ENCODE measurements at regions of chr6 and their contacts with region 1.

Region 1: GRCh38 chr6:110318971-110319370 is 39.2 kb downstream of the METTL24 start:
- DNase-seq: no peak
- H3K4me3 ChIP-seq: no peak overlapping the region
- H3K27me3 ChIP-seq: no peaks in the 10 kb centered on the region; the same call in 1 of the 2 replicates
- CTCF ChIP-seq: no peak

Region 2: DNA sequence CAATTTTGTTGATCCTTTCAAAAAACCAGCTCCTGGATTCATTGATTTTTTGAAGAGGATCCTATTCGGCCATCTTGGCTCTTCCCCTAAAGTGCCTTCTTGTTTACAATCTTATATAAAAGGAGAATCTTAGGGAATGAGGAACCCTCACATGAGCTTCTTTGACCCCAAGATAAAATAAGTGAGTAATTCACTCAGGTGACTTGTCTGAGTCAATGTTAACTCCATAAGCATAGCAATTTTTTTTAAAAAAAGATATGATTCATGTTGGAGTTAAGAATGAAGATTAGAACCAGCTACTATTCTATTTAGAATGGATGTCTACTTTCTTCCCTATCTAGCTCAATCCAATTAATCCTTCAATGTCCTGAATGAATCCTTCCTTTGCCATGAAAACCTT is 160.5 kb before region 1 on chr6:
- CTCF ChIA-PET with region 1: no interaction called
- POLR2A ChIA-PET with region 1: no interaction called
- DNase-seq: no peak
- H3K4me3 ChIP-seq: no peak overlapping the region
- H3K27me3 ChIP-seq: no peaks in the 10 kb centered on the region
- CTCF ChIP-seq: no peak

Region 3: DNA sequence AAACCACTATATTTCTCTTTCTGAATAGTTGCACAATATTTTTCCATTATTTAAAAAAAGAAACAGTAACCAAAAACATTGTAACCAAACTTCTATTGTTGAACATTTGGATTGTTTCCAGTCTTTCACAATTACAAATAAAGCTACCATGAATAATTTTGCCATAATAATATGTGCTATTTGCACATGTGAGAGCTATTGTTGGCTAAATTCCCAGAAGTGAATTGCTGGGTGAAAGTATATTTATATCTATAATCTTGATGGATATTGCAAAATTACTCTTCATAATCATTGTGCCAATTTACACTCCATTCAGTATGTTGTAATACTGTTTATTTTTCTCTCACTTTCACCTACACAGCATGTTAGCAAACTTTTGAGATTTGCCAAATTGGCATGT is 194.0 kb after region 1 on chr6:
- CTCF ChIA-PET with region 1: no interaction called
- POLR2A ChIA-PET with region 1: interaction called, 13 read pairs
- DNase-seq: no peak
- H3K4me3 ChIP-seq: no peak overlapping the region
- H3K27me3 ChIP-seq: no peaks in the 10 kb centered on the region; the same call in 1 of the 2 replicates
- CTCF ChIP-seq: no peak